Vagina (tissue), 2 donors: ENCODE measurements at regions of chr11 and their contacts with region 1.

Region 1: GRCh38 chr11:114832532-114833125 is 154.3 kb downstream of the NXPE2 start:
- DNase-seq: no peak
- H3K4me3 ChIP-seq: no peak overlapping the region
- H3K27ac ChIP-seq: no peak overlapping the region
- H3K4me1 ChIP-seq: no peaks in the 10 kb centered on the region
- H3K27me3 ChIP-seq: no peaks in the 10 kb centered on the region
- CTCF ChIP-seq: no peak
- POLR2A ChIP-seq: no peak

Region 2: DNA sequence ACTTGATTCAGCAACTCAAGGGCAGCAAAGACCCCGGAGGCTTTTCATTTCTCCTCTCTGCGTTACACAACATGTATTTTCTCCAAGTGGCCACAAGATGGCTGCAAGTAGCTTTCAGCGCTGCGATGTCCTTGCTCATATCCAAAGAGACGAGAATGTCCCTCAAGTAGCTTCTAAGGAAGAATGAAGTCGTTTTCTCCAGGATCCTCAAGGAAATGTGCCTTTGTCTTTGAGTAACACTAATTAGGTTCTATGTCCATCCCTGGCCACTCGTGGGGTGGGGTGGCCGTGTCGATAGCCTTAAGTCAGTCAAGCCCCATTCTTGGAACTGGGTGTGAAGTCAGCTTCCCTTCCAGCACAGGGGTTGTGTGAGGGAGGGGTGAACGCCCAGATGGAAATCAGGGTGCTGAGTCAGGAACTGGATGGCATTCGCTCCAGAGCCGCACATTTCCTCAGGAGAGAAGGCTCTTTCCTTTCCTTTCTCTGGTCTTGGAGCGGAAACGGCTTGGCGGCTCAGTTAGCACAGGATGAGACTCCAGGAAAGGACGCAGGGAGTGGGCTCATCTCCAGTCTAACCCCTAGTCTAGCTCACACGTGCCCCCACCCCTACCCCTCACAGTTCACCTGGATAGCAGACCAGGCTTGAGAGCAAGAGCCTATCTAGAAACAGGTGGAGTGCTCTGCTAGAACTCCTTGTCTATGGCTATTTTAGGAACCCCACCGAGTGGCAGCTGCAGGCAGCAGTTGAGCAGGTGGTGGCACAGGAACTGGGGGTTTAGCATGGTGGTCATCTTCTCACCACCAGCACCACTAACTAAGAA is 492.1 kb before region 1 on chr11:
- intact Hi-C with region 1: loop called (anchors 5 kb)
- DNase-seq: no peak
- H3K4me3 ChIP-seq: peak overlapping the region in 1 of 2 donors; percentile 0
- H3K27ac ChIP-seq: peak overlapping the region; percentile 14
- H3K4me1 ChIP-seq: peaks cover 6% of the 10 kb centered on the region
- H3K27me3 ChIP-seq: no peaks in the 10 kb centered on the region
- CTCF ChIP-seq: peak; percentile 67 to 87 (median 74)
- POLR2A ChIP-seq: no peak